PC-3 (cell line): ENCODE measurements at regions of chr7 and their contacts with region 1.

Region 1: GRCh38 chr7:99325545-99326407 is at the start of gene ARPC1A:
- DNase-seq: peak; percentile 94
- ATAC-seq: peak; percentile 78
- H3K4me3 ChIP-seq: peak within 1 kb of the TSS; percentile 72
- H3K27ac ChIP-seq: peak within 1 kb of the TSS; percentile 65
- H3K4me1 ChIP-seq: peaks cover 35% of the 10 kb centered on the region
- H3K27me3 ChIP-seq: no peaks in the 10 kb centered on the region
- CTCF ChIP-seq: no peak
- total RNA-seq, gene ARPC1A: 183 and 193 TPM in 2 replicates

Region 2: GRCh38 chr7:99132595-99133321 is 193.0 kb before region 1 on chr7:
- CTCF ChIA-PET with region 1: no interaction called
- POLR2A ChIA-PET with region 1: interaction called, 16 read pairs
- intact Hi-C with region 1: no loop called
- DNase-seq: peak; percentile 53
- ATAC-seq: peak; percentile 70
- H3K4me3 ChIP-seq: no peak overlapping the region
- H3K27ac ChIP-seq: no peak overlapping the region
- H3K4me1 ChIP-seq: peaks cover 49% of the 10 kb centered on the region
- H3K27me3 ChIP-seq: no peaks in the 10 kb centered on the region
- CTCF ChIP-seq: no peak

Region 3: GRCh38 chr7:99422186-99422585 is 96.4 kb after region 1 on chr7:
- CTCF ChIA-PET with region 1: no interaction called
- POLR2A ChIA-PET with region 1: no interaction called
- intact Hi-C with region 1: no loop called
- DNase-seq: no peak
- ATAC-seq: peak; percentile 26; the same call in 1 of the 2 replicates
- H3K4me3 ChIP-seq: no peak overlapping the region
- H3K27ac ChIP-seq: no peak overlapping the region
- H3K4me1 ChIP-seq: no peaks in the 10 kb centered on the region
- H3K27me3 ChIP-seq: no peaks in the 10 kb centered on the region
- CTCF ChIP-seq: no peak

Region 4: DNA sequence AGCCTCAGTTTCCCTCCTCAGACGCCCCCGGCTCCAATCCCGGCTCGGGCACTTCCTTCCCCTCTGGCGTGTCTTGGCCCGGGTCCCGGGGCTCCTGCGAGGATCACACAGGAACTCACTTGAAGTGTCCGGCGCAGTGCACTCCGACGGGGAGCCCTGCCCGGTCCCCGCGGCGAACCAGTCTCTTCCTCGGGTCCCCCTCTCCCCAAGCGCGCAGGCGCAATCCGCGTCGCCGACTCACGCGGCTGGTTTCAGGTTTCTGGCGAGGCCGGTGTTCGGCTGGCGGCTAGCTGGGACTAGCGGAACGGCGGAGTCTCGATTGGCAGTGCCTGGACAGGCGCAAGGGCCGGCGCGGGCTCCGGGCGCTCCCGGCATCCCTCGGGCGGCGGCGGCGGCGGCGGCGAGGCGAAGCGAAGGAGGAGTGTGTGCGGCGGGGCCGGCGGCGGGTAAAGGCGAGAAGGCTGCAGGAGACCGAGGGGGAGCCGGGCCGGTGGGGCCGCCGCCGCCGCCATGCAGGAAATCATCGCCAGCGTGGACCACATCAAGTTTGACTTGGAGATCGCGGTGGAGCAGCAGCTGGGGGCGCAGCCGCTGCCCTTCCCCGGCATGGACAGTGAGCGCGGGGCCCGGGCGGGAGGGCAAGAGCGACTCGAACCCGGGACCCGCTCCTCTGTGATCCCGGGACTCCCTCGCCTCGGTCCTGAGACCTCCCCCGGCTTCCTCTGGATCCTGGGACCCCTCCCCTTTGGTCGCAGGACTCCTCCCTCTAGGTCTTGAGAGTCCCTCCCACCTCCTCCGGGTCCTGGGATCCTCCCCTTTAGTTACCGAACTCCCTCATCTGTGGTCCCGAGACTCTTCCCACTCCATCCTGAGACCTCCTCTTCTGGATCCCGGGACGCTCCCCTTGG is 113.1 kb after region 1 on chr7 and contains the starts of genes CPSF4 and PTCD1:
- CTCF ChIA-PET with region 1: no interaction called
- POLR2A ChIA-PET with region 1: no interaction called
- intact Hi-C with region 1: no loop called
- DNase-seq: peak; percentile 94
- ATAC-seq: peak; percentile 96
- H3K4me3 ChIP-seq: peak within 1 kb of the TSS; percentile 99
- H3K27ac ChIP-seq: peak within 1 kb of the TSS; percentile 49
- H3K4me1 ChIP-seq: peaks cover 13% of the 10 kb centered on the region
- H3K27me3 ChIP-seq: no peaks in the 10 kb centered on the region
- CTCF ChIP-seq: no peak
- total RNA-seq, gene CPSF4: 49.5 and 65.3 TPM in 2 replicates
- total RNA-seq, gene PTCD1: 10.4 and 11.5 TPM in 2 replicates